ENCODE measurements at regions of chr1 and their contacts with region 1.

Region 1: DNA sequence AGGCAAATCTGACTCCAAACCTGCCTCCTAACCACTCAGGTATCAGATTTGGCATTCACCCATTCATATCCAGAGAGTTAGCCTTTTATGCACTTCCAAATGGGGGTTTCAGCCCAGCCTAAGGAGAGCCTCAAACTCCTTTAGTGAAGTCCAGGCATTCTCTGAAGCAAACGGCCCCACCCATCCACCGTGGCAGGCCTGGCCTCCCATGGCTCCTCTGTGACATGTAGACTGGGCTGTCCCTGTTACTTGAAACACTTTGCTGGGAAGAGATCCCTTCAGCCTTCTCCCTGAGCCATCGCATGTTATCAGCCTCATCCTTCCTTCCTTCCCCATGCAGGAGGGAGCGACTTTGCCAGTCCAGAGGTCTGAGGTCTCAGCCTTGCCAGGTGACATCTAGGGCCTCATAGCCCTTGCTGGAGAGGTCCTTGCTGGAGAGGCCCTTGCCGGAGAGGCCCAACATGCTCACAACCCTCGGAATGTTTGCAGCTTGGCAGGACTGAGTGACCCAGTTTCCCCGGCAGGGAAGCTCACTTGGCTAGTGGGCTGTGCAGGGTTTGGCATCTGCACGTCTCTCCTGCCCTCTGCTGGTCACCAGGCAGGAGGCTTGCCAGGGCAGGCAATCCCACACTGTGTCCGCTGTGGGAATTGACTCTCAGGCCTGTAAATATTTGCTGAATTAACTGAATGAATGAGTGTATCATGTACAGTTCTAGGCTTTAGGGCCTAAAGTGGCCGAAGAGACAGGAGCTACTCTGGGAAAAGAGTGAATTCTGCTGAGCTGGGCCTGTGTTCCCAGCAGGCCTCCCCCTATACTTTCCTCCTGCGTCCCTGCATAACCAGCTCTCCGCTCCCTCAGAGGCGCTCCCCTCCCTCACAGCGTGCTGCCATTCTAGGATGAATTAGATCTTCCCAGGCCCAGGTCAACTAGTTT is 26.7 kb upstream of the RBM15 start:
- DNase-seq: peak; percentile 71
- CTCF ChIP-seq: peak; percentile 91

Region 2: GRCh38 chr1:110188035-110188618 is 124.3 kb before region 1 on chr1:
- CTCF ChIA-PET with region 1: interaction called, 18 read pairs
- POLR2A ChIA-PET with region 1: no interaction called
- DNase-seq: no peak
- CTCF ChIP-seq: no peak

Region 3: DNA sequence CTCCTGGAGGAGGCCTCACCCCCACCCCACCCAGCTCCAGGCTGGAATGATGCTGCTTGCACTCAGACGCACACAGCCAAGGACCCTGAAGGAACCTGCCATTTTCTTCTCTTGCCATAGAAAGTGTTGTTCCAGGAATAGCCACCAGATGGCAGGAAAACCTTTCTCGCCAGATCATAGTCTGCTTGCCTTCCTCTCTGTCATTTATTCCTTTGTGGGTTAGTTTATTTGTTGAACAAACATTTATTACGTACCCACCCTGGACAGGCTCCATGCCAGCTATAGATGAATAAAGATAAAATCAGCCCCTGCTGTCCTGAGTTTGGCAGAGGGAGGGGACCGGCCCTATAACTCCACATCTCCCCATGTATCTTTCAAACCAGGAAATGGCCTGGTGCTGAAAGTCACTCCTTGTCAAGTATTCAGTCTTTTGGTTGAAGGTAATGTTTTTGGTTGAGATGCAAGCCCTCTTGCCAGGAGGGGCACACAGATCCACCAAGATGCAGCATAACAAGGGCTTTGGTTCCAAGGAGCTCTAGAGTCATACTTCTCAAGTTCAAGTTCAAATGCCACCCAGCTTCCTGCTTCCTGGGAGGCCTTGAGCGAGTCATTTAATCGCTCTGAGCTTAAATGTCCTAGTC is 109.3 kb before region 1 on chr1:
- CTCF ChIA-PET with region 1: interaction called, 352 read pairs
- POLR2A ChIA-PET with region 1: no interaction called
- DNase-seq: peak; percentile 78
- CTCF ChIP-seq: peak; percentile 81

Region 4: GRCh38 chr1:110243574-110243973 is 68.9 kb before region 1 on chr1:
- CTCF ChIA-PET with region 1: interaction called, 11 read pairs
- POLR2A ChIA-PET with region 1: no interaction called
- DNase-seq: peak; percentile 49
- CTCF ChIP-seq: no peak

Region 5: DNA sequence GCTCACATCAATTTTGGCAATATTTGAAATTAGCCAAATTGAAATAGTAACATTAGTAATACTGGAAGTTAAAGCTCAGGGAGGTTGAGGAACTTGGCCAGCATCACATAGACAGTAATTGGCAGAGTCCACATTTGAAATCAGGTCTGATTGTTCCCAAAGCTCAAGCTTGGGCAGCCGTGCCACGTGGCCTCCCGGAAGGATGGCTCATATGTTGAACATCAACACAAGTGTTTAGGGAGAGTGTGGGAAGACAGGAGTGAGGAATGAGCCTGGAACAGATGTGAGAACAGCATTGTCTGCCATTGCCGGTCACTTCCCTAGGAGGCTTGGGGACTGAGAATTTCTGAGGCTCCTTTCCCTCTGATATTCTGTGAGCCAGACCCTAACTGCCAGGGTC is 13.5 kb before region 1 on chr1:
- CTCF ChIA-PET with region 1: interaction called, 40 read pairs
- POLR2A ChIA-PET with region 1: no interaction called
- DNase-seq: no peak
- CTCF ChIP-seq: no peak

Region 6: DNA sequence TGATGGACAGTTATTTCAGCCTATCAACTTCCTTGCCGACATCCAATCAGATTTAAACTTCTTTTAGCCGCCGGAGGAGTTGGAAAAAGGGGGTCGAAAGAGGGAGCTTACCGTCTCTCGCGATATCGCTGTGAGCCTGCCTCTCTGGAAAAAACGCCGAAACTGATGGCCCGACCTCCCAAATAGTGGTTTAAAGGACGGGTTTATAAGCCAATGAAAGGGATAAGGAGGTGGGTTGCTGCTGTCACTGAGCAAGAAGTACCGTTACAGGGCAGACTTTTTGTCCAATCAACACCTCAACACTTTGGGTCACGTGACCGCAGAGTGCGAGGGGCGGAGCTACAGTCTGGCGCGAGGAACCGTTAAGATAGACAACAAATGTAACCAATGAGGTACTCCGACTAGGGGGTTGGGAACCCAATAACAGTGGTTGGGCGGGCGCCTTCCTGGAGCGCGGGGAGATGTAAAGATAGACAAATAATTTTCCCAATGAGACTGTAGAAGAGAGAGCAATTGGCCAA is 26.5 kb after region 1 on chr1 and contains the start of gene RBM15:
- CTCF ChIA-PET with region 1: interaction called, 10 read pairs
- POLR2A ChIA-PET with region 1: interaction called, 3 read pairs
- DNase-seq: peak; percentile 96
- CTCF ChIP-seq: no peak

Region 7: DNA sequence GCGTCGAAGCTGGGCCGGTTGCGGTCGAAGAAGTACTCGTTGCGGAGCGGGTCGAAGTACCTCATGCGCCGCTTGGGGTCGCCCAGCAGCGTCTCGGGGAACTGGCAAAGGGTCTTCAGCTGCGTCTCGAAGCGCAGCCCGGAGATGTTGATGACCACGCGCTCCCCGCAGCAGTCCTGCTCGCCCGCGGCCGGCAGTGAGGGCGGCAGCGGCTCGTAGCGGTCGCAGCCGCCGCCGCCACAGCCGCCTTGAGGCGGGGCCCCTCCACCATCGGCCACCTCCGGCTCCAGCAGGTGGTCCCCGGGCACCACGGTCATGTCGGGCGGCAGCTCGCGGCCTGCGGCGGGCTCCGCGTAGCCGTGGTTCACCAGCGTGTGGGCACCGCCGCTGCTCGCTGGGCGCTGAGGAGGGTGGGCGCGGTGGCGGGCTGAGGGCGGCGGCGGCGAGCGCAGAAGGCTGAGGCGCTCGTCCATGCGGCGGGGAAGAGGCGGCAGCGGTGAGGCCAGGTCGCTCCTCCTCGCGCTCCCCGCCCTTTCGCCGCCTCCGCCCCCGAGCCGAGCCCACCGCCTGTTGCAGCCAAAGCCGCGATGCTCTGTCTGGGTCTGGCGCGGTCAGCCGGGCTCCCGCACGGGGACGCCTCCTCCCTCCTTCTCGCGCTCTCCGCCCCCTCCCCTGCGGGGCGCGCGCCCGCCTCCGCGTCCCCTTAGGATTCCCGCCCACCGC is 362.0 kb after region 1 on chr1 and contains the start of gene KCNA3:
- CTCF ChIA-PET with region 1: no interaction called
- POLR2A ChIA-PET with region 1: no interaction called
- DNase-seq: peak; percentile 65
- CTCF ChIP-seq: no peak

Measured in GM10248 (cell line).